PC-3 (cell line): ENCODE measurements at regions of chr3 and their contacts with region 1.

Region 1: GRCh38 chr3:162170581-162170980 is 674.0 kb downstream of the OTOL1 start:
- DNase-seq: peak; percentile 36
- ATAC-seq: peak; percentile 23; the same call in 1 of the 2 replicates
- H3K4me3 ChIP-seq: no peak overlapping the region
- H3K27ac ChIP-seq: peak overlapping the region; percentile 35
- H3K4me1 ChIP-seq: peaks cover 21% of the 10 kb centered on the region
- H3K27me3 ChIP-seq: no peaks in the 10 kb centered on the region
- CTCF ChIP-seq: no peak

Region 2: DNA sequence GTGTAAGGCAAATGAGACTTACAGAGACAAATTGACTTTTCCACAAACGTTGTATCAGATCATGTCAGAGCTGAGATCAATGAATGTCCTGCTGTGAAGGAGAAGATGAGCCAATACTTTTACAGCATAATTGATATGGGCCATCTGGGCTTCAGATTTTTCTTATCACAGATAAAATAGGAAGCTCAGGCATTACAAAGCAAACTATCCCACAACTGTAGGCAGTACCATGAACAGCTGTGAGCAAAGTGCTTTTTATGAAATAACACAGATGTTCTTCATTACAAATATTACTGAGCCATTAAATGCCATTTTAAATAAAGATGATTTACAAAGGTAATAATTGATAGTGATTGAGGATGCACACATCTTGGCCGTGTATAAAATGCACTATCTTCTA is 178.3 kb after region 1 on chr3:
- CTCF ChIA-PET with region 1: no interaction called
- POLR2A ChIA-PET with region 1: interaction called, 12 read pairs
- intact Hi-C with region 1: no loop called
- DNase-seq: no peak
- ATAC-seq: no peak
- H3K4me3 ChIP-seq: no peak overlapping the region
- H3K27ac ChIP-seq: no peak overlapping the region
- H3K4me1 ChIP-seq: no peaks in the 10 kb centered on the region
- H3K27me3 ChIP-seq: no peaks in the 10 kb centered on the region
- CTCF ChIP-seq: no peak